ENCODE measurements at regions of chr21 and their contacts with region 1.

Region 1: DNA sequence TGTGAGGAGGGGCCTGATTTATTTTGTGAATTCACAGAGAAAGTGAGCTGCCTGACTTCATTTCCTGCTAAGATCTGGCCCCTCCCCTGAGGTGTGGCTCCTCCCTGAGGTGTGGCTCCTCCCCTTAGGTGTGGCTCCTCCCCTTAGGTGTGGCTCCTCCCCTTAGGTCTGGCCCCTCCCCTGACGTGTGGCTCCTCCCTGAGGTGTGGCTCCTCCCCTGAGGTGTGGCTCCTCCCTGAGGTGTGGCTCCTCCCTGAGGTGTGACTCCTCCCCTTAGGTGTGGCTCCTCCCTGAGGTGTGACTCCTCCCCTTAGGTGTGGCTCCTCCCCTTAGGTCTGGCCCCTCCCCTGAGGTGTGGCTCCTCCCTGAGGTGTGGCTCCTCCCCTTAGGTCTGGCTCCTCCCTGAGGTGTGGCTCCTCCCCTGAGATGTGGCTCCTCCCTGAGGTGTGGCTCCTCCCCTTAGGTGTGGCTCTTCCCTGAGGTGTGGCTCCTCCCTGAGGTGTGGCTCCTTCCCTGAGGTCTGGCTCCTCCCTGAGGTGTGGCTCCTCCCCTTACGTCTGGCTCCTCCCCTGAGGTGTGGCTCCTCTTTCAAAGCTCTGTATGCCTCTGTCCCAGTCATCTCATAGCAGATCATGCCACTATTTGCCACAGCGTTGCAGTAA is 26.9 kb upstream of the LRRC3 start:
- DNase-seq: peak; percentile 77
- H3K4me3 ChIP-seq: no peak overlapping the region
- H3K27ac ChIP-seq: no peak overlapping the region
- H3K4me1 ChIP-seq: no peaks in the 10 kb centered on the region
- H3K27me3 ChIP-seq: no peaks in the 10 kb centered on the region
- CTCF ChIP-seq: no peak

Region 2: DNA sequence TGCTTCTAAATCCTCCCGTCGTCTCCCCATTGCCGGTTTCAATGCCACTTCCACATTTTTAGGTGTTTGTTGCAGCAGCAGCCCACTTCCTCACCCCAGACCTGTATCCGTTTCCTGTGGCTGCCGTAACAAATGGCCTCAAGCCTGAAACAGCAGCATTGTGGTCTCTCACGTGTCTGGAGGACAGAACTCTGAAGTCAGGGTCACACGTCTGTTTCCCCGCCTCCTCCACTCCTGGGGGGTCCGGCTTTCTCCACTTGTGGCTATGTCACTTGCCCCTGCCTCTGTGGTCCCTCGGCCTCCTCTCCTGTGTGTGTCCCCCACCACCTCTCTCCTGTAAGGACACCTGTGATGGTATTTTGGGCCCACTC is 53.1 kb before region 1 on chr21:
- CTCF ChIA-PET with region 1: no interaction called
- dilution Hi-C with region 1: no loop called
- in situ Hi-C with region 1: no loop called
- intact Hi-C with region 1: loop called (anchors 5 kb)
- DNase-seq: no peak
- H3K4me3 ChIP-seq: no peak overlapping the region
- H3K27ac ChIP-seq: no peak overlapping the region
- H3K4me1 ChIP-seq: peaks cover under 1% of the 10 kb centered on the region
- H3K27me3 ChIP-seq: no peaks in the 10 kb centered on the region
- CTCF ChIP-seq: no peak